ENCODE measurements at regions of chr9 and their contacts with region 1.

Region 1: DNA sequence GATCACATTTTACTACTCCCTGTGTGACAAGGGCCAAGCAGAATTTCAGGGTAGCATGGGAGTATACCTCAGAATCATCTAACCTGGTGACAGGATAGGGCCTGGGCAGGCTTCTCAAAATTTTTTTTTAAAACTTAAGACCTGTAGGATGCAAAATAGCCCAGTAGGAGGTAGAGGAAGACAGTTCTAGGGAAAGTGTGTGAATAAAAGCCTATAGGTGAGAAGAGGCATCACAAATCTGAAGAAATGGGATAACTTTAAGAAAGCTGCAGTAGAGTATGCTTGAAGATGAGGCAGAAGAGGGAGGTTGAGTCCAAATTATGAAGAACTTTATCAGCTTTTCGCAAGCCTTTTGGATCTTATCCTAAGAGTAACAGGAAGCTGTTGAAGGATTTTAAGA is 32.3 kb downstream of the CNTRL start:
- DNase-seq: peak; percentile 27
- ATAC-seq: peak; percentile 55
- H3K4me3 ChIP-seq: no peak overlapping the region
- H3K27ac ChIP-seq: no peak overlapping the region
- H3K4me1 ChIP-seq: no peaks in the 10 kb centered on the region
- H3K27me3 ChIP-seq: no peaks in the 10 kb centered on the region
- CTCF ChIP-seq: peak; percentile 43; the same call in 1 of the 2 replicates

Region 2: DNA sequence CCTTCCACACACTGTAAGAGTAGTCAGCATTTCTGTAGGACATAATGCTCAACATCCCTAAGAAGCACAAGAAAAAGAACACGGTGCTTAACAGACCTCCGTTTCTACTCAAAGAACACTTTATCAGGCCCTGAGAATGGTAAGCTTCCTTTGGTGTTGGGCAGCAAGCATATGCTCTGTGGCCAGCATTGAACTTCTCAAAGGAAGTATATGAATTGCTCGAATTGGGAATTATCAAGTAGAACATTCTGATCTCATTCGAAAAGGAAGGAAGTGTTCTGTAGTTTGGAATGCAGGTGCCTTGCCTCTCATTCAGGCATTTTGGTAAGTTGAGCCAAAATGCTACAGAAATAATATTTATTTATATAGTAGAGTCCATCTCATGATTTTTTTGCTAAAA is 118.0 kb before region 1 on chr9:
- CTCF ChIA-PET with region 1: no interaction called
- POLR2A ChIA-PET with region 1: no interaction called
- intact Hi-C with region 1: no loop called
- DNase-seq: no peak
- ATAC-seq: no peak
- H3K4me3 ChIP-seq: no peak overlapping the region
- H3K27ac ChIP-seq: no peak overlapping the region
- H3K4me1 ChIP-seq: no peaks in the 10 kb centered on the region; the same call in 1 of the 2 replicates
- H3K27me3 ChIP-seq: no peaks in the 10 kb centered on the region
- CTCF ChIP-seq: no peak

Region 3: DNA sequence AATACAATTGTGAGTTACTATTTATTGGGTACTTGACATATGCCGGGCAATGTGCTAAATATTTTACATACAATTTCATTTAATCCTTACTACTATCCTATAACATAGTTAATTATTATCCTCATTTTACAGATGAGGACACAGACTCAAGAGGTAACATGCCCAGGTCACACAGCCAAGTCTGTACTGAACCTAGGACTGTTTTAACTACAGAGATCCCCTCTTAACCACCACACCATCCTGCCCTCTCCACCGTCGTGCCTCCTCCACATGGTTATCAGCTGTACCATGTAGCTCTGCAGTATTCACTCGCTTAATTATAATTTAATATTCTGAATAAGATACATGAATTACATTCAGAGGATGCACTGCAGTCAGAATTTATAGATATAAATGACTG is 89.3 kb after region 1 on chr9:
- CTCF ChIA-PET with region 1: no interaction called
- POLR2A ChIA-PET with region 1: no interaction called
- intact Hi-C with region 1: loop called (anchors 5 kb)
- DNase-seq: no peak
- ATAC-seq: no peak
- H3K4me3 ChIP-seq: no peak overlapping the region
- H3K27ac ChIP-seq: no peak overlapping the region
- H3K4me1 ChIP-seq: peaks cover 27% of the 10 kb centered on the region
- H3K27me3 ChIP-seq: no peaks in the 10 kb centered on the region
- CTCF ChIP-seq: no peak

Region 4: GRCh38 chr9:121474231-121474891 is 367.3 kb after region 1 on chr9:
- CTCF ChIA-PET with region 1: interaction called, 11 read pairs
- POLR2A ChIA-PET with region 1: no interaction called
- intact Hi-C with region 1: no loop called
- DNase-seq: no peak
- ATAC-seq: no peak
- H3K4me3 ChIP-seq: no peak overlapping the region
- H3K27ac ChIP-seq: no peak overlapping the region
- H3K4me1 ChIP-seq: no peaks in the 10 kb centered on the region
- H3K27me3 ChIP-seq: peaks cover 34% of the 10 kb centered on the region
- CTCF ChIP-seq: no peak

Measured in PC-3 (cell line).